ENCODE measurements at regions of chr3 and their contacts with region 1.

Region 1: GRCh38 chr3:30606301-30607031 is at the start of gene TGFBR2:
- DNase-seq: peak; percentile 98
- H3K4me3 ChIP-seq: peak within 1 kb of the TSS; percentile 97 to 100 (median 97)
- H3K27ac ChIP-seq: peak within 1 kb of the TSS; percentile 99
- H3K4me1 ChIP-seq: peaks cover 33% of the 10 kb centered on the region
- H3K27me3 ChIP-seq: no peaks in the 10 kb centered on the region
- CTCF ChIP-seq: peak; percentile 1 to 37
- total RNA-seq, gene TGFBR2: 149 to 179 TPM

Region 2: GRCh38 chr3:29789686-29790085 is 816.8 kb before region 1 on chr3:
- CTCF ChIA-PET with region 1: no interaction called
- dilution Hi-C with region 1: no loop called
- in situ Hi-C with region 1: no loop called
- intact Hi-C with region 1: no loop called
- DNase-seq: no peak
- H3K4me3 ChIP-seq: no peak overlapping the region
- H3K27ac ChIP-seq: no peak overlapping the region
- H3K4me1 ChIP-seq: no peaks in the 10 kb centered on the region
- H3K27me3 ChIP-seq: no peaks in the 10 kb centered on the region
- CTCF ChIP-seq: no peak

Region 3: GRCh38 chr3:30199096-30199759 is 407.2 kb before region 1 on chr3:
- CTCF ChIA-PET with region 1: no interaction called
- dilution Hi-C with region 1: no loop called
- in situ Hi-C with region 1: no loop called
- intact Hi-C with region 1: loop called (anchors 2 kb)
- DNase-seq: peak; percentile 21
- H3K4me3 ChIP-seq: no peak overlapping the region
- H3K27ac ChIP-seq: no peak overlapping the region
- H3K4me1 ChIP-seq: peaks cover 12% of the 10 kb centered on the region
- H3K27me3 ChIP-seq: no peaks in the 10 kb centered on the region
- CTCF ChIP-seq: peak; percentile 75

Region 4: DNA sequence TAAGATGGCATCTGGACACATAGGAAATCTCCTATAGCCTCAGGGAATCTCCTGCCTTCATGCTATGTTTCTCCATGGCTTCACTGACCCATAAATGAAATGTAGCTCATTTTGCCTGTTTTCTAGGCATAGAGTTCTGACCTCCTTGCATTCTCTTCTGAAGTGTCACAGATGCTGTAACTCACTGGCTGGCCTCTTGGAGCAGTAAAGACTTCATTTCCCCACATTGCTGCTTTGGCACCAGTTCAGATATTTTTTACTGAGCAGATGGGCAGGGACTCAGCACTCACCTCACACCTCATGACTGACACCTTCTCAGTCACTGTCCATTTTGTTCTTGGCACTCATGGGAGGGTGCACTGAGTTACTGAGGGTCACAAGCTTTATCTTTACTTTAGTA is 286.8 kb before region 1 on chr3:
- CTCF ChIA-PET with region 1: no interaction called
- dilution Hi-C with region 1: no loop called
- in situ Hi-C with region 1: no loop called
- intact Hi-C with region 1: loop called (anchors 1 kb)
- DNase-seq: peak; percentile 63
- H3K4me3 ChIP-seq: no peak overlapping the region
- H3K27ac ChIP-seq: no peak overlapping the region
- H3K4me1 ChIP-seq: peaks cover 4% of the 10 kb centered on the region
- H3K27me3 ChIP-seq: no peaks in the 10 kb centered on the region
- CTCF ChIP-seq: peak; percentile 62 to 69

Region 5: GRCh38 chr3:30502742-30503073 is 103.8 kb before region 1 on chr3:
- CTCF ChIA-PET with region 1: no interaction called
- dilution Hi-C with region 1: no loop called
- in situ Hi-C with region 1: no loop called
- intact Hi-C with region 1: loop called (anchors 2 kb)
- DNase-seq: peak; percentile 95
- H3K4me3 ChIP-seq: no peak overlapping the region
- H3K27ac ChIP-seq: peak overlapping the region; percentile 86
- H3K4me1 ChIP-seq: peaks cover 31% of the 10 kb centered on the region
- H3K27me3 ChIP-seq: no peaks in the 10 kb centered on the region
- CTCF ChIP-seq: no peak

Region 6: DNA sequence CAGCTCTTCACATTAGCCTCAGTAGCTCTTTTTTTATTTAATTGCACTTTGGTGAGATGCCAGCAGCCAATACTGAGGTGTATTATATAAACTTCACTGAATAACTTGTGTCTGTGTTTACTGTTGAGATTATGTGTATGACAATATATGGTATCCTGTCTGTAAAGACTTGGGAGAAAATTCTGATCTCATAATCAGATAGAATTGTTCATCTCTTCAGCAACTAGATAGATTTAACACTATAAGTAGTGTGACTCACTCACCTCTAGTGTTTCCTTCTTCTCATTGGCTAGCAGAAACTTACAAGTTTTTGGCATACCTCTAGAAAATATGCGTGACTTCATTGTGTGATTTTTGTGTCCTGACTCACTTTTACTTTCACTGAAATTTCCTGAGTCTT is 67.7 kb before region 1 on chr3:
- CTCF ChIA-PET with region 1: no interaction called
- dilution Hi-C with region 1: no loop called
- in situ Hi-C with region 1: no loop called
- intact Hi-C with region 1: loop called (anchors 1 kb)
- DNase-seq: peak; percentile 83
- H3K4me3 ChIP-seq: peak overlapping the region in 1 of 3 experiments; percentile 12
- H3K27ac ChIP-seq: peak overlapping the region; percentile 92
- H3K4me1 ChIP-seq: peaks cover 23% of the 10 kb centered on the region
- H3K27me3 ChIP-seq: no peaks in the 10 kb centered on the region
- CTCF ChIP-seq: no peak

Region 7: GRCh38 chr3:30693470-30694120 is 87.1 kb after region 1 on chr3:
- CTCF ChIA-PET with region 1: no interaction called
- dilution Hi-C with region 1: no loop called
- in situ Hi-C with region 1: no loop called
- intact Hi-C with region 1: loop called (anchors 5 kb)
- DNase-seq: peak; percentile 41
- H3K4me3 ChIP-seq: no peak overlapping the region
- H3K27ac ChIP-seq: no peak overlapping the region
- H3K4me1 ChIP-seq: peaks cover 24% of the 10 kb centered on the region
- H3K27me3 ChIP-seq: no peaks in the 10 kb centered on the region
- CTCF ChIP-seq: peak; percentile 74 to 82

Measured in mammary epithelial cell (primary cell).